ENCODE measurements at regions of chr17 and their contacts with region 1.

Region 1: DNA sequence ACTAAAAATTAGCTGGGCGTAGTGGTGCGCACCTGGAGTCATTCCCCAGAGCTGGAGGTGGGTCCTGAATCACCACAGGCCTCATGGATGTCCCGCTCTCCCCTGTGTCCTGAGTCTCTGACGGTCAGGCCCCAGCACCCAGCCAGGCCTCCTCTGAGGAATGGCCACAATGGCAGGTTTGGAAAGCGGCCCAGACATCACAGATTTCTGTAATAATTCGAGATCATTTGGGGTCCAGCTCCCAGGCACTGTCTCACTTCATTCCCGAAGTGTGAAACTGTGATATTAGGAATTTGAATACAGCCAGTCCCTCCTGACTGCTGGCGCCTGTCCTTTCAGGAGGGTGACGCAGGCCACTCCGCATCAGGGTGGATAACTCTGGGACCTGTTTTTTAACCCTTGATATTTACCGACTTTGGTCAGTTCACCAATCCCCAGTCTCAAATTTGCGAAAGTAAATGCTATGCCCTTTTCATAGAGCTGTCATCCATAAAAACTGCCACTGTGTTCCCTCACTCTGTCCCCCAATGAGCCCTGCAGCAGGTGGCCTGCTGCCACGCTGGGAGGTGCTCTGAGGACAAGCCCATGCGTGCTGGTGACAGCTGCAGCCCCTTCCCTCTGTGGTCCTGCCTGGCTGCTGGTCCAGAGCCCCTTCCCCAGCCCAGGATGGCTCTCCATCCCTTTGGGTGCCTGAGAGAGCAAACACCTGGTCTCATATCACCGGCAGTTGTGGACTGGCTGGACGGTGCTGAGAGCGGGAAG is 28.3 kb upstream of the RPTOR start:
- DNase-seq: no peak
- H3K4me3 ChIP-seq: no peak overlapping the region
- H3K4me3 Mint-ChIP-seq: no peak overlapping the region
- H3K27ac Mint-ChIP-seq: no peak overlapping the region
- H3K4me1 ChIP-seq: no peaks in the 10 kb centered on the region
- H3K4me1 Mint-ChIP-seq: no peaks in the 10 kb centered on the region
- H3K27me3 ChIP-seq: no peaks in the 10 kb centered on the region; the same call in 1 of the 2 replicates
- H3K27me3 Mint-ChIP-seq: peaks cover 9% of the 10 kb centered on the region
- CTCF ChIP-seq: no peak

Region 2: GRCh38 chr17:80454557-80455335 is 61.6 kb before region 1 on chr17:
- CTCF ChIA-PET with region 1: no interaction called
- POLR2A ChIA-PET with region 1: no interaction called
- intact Hi-C with region 1: no loop called
- DNase-seq: peak; percentile 96 to 98
- H3K4me3 ChIP-seq: peak overlapping the region; percentile 91
- H3K4me3 Mint-ChIP-seq: peak overlapping the region; percentile 89
- H3K27ac Mint-ChIP-seq: peak overlapping the region; percentile 97
- H3K4me1 ChIP-seq: peaks cover 9% of the 10 kb centered on the region
- H3K4me1 Mint-ChIP-seq: no peaks in the 10 kb centered on the region
- H3K27me3 ChIP-seq: no peaks in the 10 kb centered on the region
- H3K27me3 Mint-ChIP-seq: peaks cover 4% of the 10 kb centered on the region
- CTCF ChIP-seq: no peak

Region 3: DNA sequence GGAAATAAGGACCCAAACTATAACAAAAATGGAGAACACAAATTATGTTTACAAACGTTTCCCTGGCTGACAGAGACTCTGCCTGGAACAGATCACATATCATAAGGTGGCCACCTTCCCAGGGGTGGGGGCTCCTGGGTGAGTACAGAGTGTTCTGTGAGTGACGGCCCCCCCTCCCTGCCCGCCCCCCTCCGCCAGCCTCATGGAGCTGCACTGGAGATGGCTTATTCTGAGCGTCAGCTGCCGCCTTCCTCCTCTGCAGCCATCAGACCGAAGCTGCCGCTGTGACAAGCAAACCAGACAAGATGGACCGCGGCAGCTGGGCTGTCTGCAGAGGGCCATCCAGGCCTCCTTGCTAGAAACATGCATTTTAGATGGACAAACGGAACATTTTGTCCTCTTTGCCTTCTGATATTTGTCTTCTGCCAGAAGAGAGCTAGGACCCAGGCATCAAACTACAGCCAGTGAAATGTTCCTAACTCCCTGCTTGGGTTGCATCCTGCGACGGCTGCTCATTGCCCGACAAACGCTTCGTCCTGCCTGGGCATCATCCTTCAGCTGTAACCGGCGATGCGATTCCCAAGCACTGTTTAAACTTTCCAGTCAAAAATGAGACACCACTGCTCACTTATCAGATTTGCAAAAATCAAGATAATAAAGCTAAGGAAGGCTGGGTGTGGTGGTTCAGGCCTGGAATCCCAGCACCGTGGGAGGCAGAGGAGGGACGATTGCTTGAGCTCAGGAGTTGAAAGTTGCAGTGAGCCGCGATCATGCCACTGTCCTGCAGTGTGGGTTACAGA is 13.0 kb after region 1 on chr17:
- CTCF ChIA-PET with region 1: interaction called, 10 read pairs
- POLR2A ChIA-PET with region 1: interaction called, 4 read pairs
- intact Hi-C with region 1: no loop called
- DNase-seq: no peak
- H3K4me3 ChIP-seq: no peak overlapping the region
- H3K4me3 Mint-ChIP-seq: no peak overlapping the region
- H3K27ac Mint-ChIP-seq: no peak overlapping the region
- H3K4me1 ChIP-seq: 0 out of 2 replicates have a peak, but pooled peaks cover 5% of the 10 kb centered on the region
- H3K4me1 Mint-ChIP-seq: no peaks in the 10 kb centered on the region
- H3K27me3 ChIP-seq: no peaks in the 10 kb centered on the region
- H3K27me3 Mint-ChIP-seq: no peaks in the 10 kb centered on the region
- CTCF ChIP-seq: no peak